ENCODE measurements at regions of chr11 and their contacts with region 1.

Region 1: GRCh38 chr11:78416305-78417178 is 1.1 kb downstream of the GAB2 start:
- DNase-seq: peak; percentile 82
- CTCF ChIP-seq: peak; percentile 76

Region 2: GRCh38 chr11:78228467-78228866 is 188.1 kb before region 1 on chr11:
- in situ Hi-C with region 1: loop called (anchors 10 kb)
- DNase-seq: peak; percentile 68
- CTCF ChIP-seq: peak; percentile 66

Region 3: DNA sequence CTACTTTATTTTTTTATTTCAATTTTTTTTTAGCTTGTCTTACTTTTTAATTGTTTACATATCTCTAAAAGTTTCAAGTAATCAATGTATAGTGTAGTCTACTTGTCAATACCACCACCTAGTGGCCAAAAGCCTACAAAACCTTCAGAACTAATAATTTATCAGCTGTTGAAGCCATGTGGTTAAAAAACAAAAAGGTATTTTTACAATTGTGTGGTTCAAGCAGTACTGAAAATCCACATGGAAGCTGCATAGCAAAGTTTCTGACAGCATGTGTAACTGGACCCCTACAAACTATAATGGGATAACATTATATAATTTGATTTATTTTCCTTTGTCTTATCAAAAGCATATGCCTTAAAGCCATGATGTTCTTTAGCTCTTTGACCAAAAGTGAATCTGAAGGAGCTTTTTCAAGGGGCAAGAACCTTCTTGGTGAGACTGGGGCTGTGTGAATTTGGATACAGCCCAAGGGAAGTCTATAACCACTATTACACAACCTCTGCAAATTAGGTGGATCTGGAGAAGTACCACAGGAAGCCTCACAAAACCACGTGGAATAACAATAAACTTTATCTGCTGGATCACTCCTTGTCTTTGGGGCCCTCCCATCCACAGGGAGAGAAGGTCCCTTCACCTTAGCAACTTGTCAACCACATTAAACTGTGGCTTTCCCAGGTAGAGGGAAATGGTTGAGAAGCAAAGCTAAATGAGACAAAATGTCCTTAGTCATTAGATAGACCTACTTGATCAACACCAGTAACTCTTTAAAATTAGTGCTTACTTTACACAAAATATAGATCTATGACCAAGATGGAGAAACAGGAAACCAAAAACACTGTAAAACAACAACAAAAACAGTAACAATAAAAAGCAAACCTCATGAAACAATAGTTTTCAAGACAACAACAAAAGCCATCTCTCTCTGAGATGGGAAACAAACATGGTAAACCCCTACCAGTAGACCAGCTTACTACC is 148.2 kb after region 1 on chr11:
- in situ Hi-C with region 1: loop called (anchors 10 kb)
- DNase-seq: no peak
- CTCF ChIP-seq: peak; percentile 61

Region 4: DNA sequence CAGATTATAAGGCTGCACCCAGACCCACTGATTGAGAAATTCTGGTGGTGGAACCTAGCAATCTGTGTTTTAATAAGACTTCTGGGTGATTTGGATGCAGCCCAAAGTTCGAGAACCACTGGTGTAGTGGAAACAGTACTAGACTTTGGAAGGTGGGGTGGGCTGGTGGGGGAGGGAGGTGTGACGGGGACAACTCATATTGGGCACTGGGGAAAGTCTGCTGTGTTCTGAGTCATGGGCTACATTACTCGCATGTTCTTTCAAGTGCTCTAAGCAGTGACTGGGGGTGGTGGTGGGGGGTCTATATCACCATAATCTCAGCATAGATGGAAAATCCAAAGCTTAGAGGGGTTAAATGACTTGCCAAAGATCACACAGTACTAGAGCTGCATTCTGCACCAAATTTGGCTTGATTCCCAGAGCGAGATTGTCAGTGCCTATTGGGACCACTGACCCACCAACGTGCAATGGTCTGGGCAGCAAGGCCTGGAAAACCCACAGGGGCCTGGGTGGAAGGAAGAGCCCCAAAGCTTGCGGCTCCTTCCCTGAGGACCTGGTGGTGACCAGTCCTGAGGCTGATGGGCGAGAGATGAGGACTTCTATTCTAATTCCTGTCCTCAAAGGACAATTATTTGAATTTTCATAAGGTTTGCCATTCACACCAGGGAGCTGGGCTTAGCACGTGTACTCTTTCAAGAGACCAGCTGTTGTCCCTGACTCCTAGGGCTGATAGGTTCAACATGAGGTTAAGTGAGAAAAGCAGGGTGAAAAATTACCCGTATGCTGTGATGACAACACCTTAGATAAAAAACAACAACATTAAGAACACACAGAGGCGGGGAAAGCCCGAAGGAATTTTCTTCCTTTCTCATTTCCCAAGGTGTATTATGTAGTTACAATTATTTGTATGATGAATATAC is 235.6 kb after region 1 on chr11:
- in situ Hi-C with region 1: no loop called
- DNase-seq: no peak
- CTCF ChIP-seq: no peak